Activated CD4-positive, alpha-beta memory T cell treated with anti-CD3 and anti-CD28 coated beads, Interleukin-2, amount 10 ng/mL, durations not matched to agents 7 days and 5 days (primary cell): ENCODE measurements at regions of chr11 and their contacts with region 1.

Region 1: GRCh38 chr11:116454020-116454645 is 318.7 kb downstream of the BUD13 start:
- DNase-seq: peak; percentile 31
- H3K4me3 Mint-ChIP-seq: no peak overlapping the region
- H3K27ac Mint-ChIP-seq: no peak overlapping the region
- H3K4me1 Mint-ChIP-seq: no peaks in the 10 kb centered on the region
- H3K27me3 Mint-ChIP-seq: no peaks in the 10 kb centered on the region

Region 2: DNA sequence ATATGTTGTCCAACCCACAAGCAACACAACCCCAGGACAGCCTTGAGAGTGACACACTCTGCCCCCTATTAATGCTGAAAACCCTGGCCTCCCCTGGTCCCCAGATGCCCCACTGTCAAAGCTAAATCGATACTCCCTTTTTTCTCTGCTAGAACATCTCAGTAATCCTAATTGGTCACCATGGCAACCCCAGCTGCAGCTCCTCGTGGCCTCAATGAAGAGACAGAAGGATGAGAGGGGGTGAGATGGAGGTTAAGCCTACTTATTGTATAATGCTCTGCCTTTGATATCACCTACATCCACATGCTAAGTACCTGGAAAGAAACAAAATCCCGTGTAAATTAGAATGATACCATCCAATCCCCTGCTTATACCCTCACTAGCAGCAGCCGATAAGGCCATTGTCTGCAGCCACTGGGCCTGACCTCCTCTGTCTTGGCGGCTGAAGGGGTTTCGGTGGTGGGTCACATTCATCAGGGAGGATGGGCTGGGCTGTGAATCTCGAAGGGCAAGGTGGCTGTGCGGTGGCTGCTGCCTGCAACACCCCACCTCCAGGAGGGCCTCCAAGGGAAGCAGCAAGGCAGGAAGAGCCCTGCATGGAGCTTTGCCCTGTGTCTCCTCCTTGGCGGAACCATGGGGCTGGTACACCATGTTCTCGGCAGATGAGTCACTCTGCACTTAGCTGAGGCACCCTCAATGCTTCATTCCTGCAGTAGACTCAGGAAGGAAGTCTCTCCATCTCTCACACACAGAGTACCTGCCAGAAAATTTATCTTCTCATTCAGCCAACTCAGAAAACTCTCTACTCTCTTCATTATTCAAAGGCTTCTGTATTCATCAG is 80.8 kb before region 1 on chr11:
- CTCF ChIA-PET with region 1: no interaction called
- POLR2A ChIA-PET with region 1: no interaction called
- DNase-seq: no peak
- H3K4me3 Mint-ChIP-seq: no peak overlapping the region
- H3K27ac Mint-ChIP-seq: no peak overlapping the region
- H3K4me1 Mint-ChIP-seq: no peaks in the 10 kb centered on the region
- H3K27me3 Mint-ChIP-seq: no peaks in the 10 kb centered on the region

Region 3: DNA sequence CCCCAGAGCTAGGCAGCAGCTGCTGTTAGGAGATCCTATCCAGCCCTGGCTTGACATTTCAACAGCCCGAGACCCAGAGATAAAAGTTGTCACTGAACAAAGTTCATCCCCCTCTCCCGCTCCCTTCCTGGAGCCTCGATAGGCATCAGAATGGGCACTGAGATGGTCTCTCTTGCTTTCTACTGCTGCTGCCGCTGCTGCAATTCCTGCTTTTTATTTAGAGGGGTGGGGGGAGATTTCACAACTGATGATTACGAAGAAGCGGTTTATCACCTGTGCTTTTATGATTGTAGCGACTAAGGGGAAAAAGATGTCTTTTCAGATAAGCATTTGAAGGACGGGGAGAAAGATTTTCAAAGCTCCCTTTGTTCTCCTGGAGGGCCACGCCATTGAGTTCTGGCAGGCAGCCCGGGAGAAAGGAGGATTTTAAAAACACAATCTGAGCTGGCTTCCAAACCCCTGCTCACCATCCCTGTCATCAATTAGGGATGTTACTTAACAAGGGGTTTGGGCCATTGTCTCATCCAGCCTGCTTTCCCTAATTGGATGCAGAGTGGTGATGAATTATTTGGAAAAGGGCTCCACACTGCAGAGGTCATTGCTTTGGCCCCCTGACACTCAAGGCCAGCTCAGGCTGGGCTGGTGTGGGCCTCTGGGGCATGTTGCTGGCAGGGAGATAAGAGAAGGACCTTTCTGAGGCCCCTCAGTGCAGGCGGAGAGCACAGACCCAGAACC is 26.1 kb before region 1 on chr11:
- CTCF ChIA-PET with region 1: no interaction called
- POLR2A ChIA-PET with region 1: no interaction called
- DNase-seq: no peak
- H3K4me3 Mint-ChIP-seq: no peak overlapping the region
- H3K27ac Mint-ChIP-seq: no peak overlapping the region
- H3K4me1 Mint-ChIP-seq: no peaks in the 10 kb centered on the region
- H3K27me3 Mint-ChIP-seq: peaks cover 2% of the 10 kb centered on the region

Region 4: GRCh38 chr11:116439361-116439677 is 14.8 kb before region 1 on chr11:
- CTCF ChIA-PET with region 1: no interaction called
- POLR2A ChIA-PET with region 1: no interaction called
- DNase-seq: no peak
- H3K4me3 Mint-ChIP-seq: no peak overlapping the region
- H3K27ac Mint-ChIP-seq: no peak overlapping the region
- H3K4me1 Mint-ChIP-seq: no peaks in the 10 kb centered on the region
- H3K27me3 Mint-ChIP-seq: no peaks in the 10 kb centered on the region

Region 5: DNA sequence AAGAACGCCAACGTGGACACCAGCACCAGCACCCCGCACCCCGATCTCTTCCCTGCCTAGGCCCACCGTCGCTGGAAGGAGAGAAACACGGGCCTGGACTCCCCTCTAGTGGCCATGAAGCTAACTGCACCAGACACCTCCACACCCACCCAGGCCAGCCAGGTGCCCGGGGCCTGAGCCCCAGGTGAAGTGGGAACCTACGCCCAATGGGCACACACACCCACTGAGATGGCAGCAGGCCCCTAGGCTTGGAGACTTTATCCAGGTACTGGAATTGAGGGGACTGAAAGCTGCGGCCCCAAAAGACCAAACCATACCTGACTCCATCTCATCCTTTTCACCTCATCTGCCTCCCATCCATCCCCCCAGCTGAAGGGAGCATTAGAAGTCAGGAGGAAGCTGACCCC is 237.6 kb after region 1 on chr11:
- CTCF ChIA-PET with region 1: interaction called, 12 read pairs
- POLR2A ChIA-PET with region 1: no interaction called
- DNase-seq: peak; percentile 55
- H3K4me3 Mint-ChIP-seq: no peak overlapping the region
- H3K27ac Mint-ChIP-seq: no peak overlapping the region
- H3K4me1 Mint-ChIP-seq: peaks cover 3% of the 10 kb centered on the region
- H3K27me3 Mint-ChIP-seq: no peaks in the 10 kb centered on the region